Caco-2 (cell line): ENCODE measurements at regions of chr14 and their contacts with region 1.

Region 1: DNA sequence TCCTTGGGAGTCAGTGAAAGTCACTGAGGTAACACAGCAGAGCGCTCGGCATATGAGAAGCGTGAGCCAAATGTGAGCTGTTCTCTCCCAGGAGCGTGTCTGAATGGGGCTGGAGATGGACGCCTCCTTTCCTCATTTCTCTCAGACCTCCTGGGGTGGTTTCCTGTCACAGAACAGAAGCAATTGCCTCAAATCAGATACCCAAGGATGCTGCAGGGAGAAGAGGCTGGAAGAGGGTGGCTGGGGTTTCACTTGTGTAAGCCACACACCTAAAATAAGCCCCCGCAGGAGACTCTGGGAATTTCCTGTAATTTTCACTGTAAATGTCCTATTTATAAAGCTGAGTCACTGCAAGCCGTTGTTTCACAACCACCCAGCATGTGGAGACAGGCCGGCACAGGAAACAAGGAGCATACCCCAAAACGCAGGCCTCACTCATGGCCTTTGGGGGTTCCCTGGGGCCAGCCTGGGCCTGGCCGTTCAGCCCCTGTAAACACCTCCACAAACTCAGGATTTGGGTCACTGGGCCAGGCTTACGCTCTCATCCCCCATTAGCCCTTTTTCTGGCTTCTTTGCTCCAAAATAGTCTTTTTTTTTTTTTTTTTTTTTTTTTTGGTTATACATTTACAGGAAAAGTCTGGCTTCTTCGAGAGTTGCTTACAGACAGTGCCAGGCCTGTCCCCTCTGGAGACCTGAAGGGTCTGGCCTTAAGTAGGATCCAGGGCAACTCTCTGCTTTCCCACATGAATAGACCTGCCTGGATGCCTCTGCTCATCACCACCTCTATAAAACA is 55.3 kb downstream of the VCPKMT start:
- DNase-seq: peak; percentile 74 to 75
- H3K4me3 ChIP-seq: no peak overlapping the region
- H3K4me3 Mint-ChIP-seq: no peak overlapping the region
- H3K27ac Mint-ChIP-seq: peak overlapping the region; percentile 89
- H3K4me1 ChIP-seq: peaks cover 76% of the 10 kb centered on the region
- H3K4me1 Mint-ChIP-seq: peaks cover 26% of the 10 kb centered on the region
- H3K27me3 ChIP-seq: no peaks in the 10 kb centered on the region
- H3K27me3 Mint-ChIP-seq: no peaks in the 10 kb centered on the region
- CTCF ChIP-seq: peak; percentile 9 to 28

Region 2: GRCh38 chr14:49867831-49868723 is 193.0 kb before region 1 on chr14:
- CTCF ChIA-PET with region 1: interaction called, 10 read pairs
- POLR2A ChIA-PET with region 1: interaction called, 3 read pairs
- intact Hi-C with region 1: loop called (anchors 1 kb)
- DNase-seq: peak; percentile 94 to 97
- H3K4me3 ChIP-seq: peak overlapping the region; percentile 47
- H3K4me3 Mint-ChIP-seq: peak overlapping the region; percentile 95
- H3K27ac Mint-ChIP-seq: peak overlapping the region; percentile 89
- H3K4me1 ChIP-seq: peaks cover 11% of the 10 kb centered on the region
- H3K4me1 Mint-ChIP-seq: peaks cover 5% of the 10 kb centered on the region
- H3K27me3 ChIP-seq: no peaks in the 10 kb centered on the region
- H3K27me3 Mint-ChIP-seq: no peaks in the 10 kb centered on the region
- CTCF ChIP-seq: no peak

Region 3: DNA sequence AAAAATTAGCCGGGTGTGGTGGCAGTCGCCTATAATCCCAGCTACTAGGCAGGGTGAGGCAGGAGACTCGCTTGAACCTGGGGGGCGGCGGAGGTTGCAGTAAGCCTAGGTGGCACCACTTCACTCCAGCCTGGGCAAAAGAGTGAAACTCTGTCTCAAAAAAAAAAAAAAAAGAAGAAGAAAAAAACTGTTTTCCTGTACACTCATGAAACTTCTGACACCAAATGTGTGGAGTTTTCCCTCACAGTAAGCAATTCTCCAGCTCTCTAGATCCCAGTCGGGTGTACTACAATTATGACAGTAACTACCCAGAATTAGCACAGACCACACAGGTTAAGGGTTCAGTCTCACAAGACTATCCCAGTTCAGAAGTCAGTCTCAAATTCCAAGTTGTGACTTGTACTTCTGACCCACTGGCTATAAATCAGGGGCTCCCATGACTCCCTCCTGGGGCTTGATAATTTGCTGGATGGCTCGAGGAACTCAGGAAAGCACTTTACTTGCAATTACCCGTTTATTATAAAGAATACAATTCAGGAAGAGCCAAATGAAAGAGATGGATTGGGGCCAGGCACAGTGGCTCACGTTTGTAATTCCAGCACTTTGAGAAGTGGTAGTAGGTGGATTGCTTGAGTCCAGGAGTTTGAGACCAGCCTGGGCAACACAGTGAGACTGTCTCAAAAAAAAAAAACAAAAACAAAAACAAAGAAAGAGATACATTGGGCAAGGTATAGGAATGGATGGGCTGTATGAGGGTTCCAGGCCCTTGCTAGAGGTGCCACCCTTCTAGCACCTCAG is 180.6 kb before region 1 on chr14:
- CTCF ChIA-PET with region 1: no interaction called
- POLR2A ChIA-PET with region 1: no interaction called
- intact Hi-C with region 1: no loop called
- DNase-seq: no peak
- H3K4me3 ChIP-seq: no peak overlapping the region
- H3K4me3 Mint-ChIP-seq: no peak overlapping the region
- H3K27ac Mint-ChIP-seq: no peak overlapping the region
- H3K4me1 ChIP-seq: peaks cover 6% of the 10 kb centered on the region; the same call in 1 of the 2 replicates
- H3K4me1 Mint-ChIP-seq: peaks cover 8% of the 10 kb centered on the region
- H3K27me3 ChIP-seq: no peaks in the 10 kb centered on the region
- H3K27me3 Mint-ChIP-seq: no peaks in the 10 kb centered on the region
- CTCF ChIP-seq: no peak

Region 4: DNA sequence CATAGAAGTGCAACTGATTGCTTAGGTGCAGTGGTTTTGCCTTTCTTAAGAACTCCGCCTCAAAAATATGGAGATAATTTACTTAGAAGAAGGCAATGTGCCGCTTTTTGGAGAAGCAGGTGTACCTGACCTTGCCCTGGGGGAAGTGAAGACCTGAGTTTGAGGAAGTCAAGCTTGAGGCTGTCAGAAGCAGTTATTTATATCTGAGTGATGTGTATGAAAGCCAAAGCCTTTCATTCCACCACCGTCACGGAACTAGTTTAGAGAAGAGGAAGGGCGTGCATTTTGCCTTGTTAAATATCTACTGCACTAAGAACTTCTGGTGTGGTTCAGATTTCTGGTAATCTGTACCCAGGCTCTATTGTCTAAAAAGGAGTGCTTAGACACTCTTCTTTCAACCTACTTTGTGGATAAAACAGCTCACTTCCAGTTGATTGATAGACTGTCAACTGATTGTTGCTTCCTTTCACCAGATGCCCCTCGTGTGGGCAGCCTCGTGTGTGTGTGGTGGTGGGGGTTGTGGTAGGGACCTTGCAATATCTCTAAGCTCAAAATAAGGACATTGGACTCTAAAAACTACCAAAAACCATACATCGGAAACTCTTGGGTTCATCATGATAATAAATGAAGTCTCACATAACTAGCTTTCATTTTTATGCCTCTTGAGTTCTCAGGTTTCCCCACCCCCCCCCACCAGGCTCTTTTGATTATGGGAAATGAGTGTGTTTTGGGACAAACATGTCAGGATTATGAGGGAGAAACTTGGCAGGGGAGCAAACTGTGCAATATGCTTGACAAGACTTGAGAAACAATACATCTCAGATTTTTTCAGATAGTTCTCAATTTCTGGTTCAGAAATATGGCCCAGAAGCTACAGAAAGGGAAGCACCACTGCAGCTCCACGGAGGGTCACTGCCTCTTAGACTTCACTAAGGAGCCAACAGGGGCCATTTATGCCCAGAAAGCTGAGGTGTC is 89.6 kb before region 1 on chr14:
- CTCF ChIA-PET with region 1: no interaction called
- POLR2A ChIA-PET with region 1: no interaction called
- intact Hi-C with region 1: no loop called
- DNase-seq: no peak
- H3K4me3 ChIP-seq: no peak overlapping the region
- H3K4me3 Mint-ChIP-seq: no peak overlapping the region
- H3K27ac Mint-ChIP-seq: peak overlapping the region; percentile 74
- H3K4me1 ChIP-seq: peaks cover 67% of the 10 kb centered on the region
- H3K4me1 Mint-ChIP-seq: peaks cover 53% of the 10 kb centered on the region
- H3K27me3 ChIP-seq: no peaks in the 10 kb centered on the region
- H3K27me3 Mint-ChIP-seq: no peaks in the 10 kb centered on the region
- CTCF ChIP-seq: no peak

Region 5: GRCh38 chr14:50018201-50018932 is 42.7 kb before region 1 on chr14:
- CTCF ChIA-PET with region 1: no interaction called
- POLR2A ChIA-PET with region 1: no interaction called
- intact Hi-C with region 1: loop called (anchors 1 kb)
- DNase-seq: peak; percentile 59 to 73
- H3K4me3 ChIP-seq: no peak overlapping the region
- H3K4me3 Mint-ChIP-seq: no peak overlapping the region
- H3K27ac Mint-ChIP-seq: peak overlapping the region; percentile 55
- H3K4me1 ChIP-seq: peaks cover 38% of the 10 kb centered on the region
- H3K4me1 Mint-ChIP-seq: peaks cover 22% of the 10 kb centered on the region
- H3K27me3 ChIP-seq: no peaks in the 10 kb centered on the region
- H3K27me3 Mint-ChIP-seq: no peaks in the 10 kb centered on the region
- CTCF ChIP-seq: no peak

Region 6: DNA sequence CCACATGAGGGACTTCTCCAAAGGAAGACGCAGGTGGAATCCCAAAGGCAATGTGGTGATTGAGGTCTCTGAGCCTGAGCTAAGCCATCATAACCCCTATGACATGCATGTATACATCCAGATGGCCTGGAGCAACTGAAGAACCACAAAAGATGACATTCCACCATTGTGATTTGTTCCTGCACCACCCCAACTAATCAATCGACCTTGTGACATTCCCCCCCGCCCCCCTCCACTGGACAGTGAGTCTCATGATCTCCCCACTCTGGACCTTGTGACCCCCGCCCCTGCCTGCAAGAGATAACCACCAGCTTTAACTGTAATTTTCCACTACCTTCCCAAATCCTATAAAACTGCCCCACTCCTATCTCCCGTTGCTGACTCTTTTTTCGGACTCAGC is 32.6 kb before region 1 on chr14:
- CTCF ChIA-PET with region 1: no interaction called
- POLR2A ChIA-PET with region 1: no interaction called
- intact Hi-C with region 1: no loop called
- DNase-seq: no peak
- H3K4me3 ChIP-seq: no peak overlapping the region
- H3K4me3 Mint-ChIP-seq: no peak overlapping the region
- H3K27ac Mint-ChIP-seq: no peak overlapping the region
- H3K4me1 ChIP-seq: peaks cover 3% of the 10 kb centered on the region; the same call in 1 of the 2 replicates
- H3K4me1 Mint-ChIP-seq: peaks cover 21% of the 10 kb centered on the region
- H3K27me3 ChIP-seq: no peaks in the 10 kb centered on the region
- H3K27me3 Mint-ChIP-seq: no peaks in the 10 kb centered on the region
- CTCF ChIP-seq: no peak

Region 7: DNA sequence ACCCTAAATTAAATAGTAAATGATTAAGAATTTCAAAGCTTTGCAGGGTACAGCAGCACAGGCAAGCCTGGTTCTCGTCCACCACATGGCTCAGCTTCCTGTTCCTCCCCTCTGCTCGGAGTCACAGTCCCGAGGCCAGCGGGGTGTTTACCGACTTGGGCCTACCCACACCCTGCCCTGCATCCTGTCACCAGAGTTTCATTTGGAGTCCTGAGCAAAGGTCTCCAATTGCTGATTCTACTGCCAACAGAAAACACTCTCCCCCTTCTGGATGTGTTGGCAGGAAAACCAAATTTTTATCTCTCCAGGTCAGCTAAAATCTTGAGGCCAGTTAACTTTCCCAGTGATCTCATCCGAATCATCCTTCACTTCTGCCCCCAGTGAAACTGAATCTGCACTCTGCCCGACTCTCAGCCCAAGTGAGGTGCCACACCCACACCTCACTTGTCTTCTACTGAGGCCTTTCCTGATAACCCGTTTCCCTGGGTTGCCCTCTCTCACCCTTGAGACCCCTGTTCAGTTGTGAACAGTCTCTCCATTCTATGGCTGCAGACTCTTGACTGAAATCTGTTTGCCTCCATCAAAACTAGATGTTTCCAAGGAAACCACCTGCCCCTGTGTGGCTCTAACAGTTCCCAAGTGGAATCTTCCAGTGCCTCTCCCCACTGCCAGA is 15.9 kb before region 1 on chr14:
- CTCF ChIA-PET with region 1: interaction called, 3 read pairs
- POLR2A ChIA-PET with region 1: no interaction called
- intact Hi-C with region 1: loop called (anchors 1 kb)
- DNase-seq: peak; percentile 7 to 64
- H3K4me3 ChIP-seq: no peak overlapping the region
- H3K4me3 Mint-ChIP-seq: no peak overlapping the region
- H3K27ac Mint-ChIP-seq: peak overlapping the region; percentile 36
- H3K4me1 ChIP-seq: peaks cover 58% of the 10 kb centered on the region
- H3K4me1 Mint-ChIP-seq: peaks cover 31% of the 10 kb centered on the region
- H3K27me3 ChIP-seq: no peaks in the 10 kb centered on the region
- H3K27me3 Mint-ChIP-seq: no peaks in the 10 kb centered on the region
- CTCF ChIP-seq: no peak